ENCODE measurements at regions of chr7 and their contacts with region 1.

Region 1: DNA sequence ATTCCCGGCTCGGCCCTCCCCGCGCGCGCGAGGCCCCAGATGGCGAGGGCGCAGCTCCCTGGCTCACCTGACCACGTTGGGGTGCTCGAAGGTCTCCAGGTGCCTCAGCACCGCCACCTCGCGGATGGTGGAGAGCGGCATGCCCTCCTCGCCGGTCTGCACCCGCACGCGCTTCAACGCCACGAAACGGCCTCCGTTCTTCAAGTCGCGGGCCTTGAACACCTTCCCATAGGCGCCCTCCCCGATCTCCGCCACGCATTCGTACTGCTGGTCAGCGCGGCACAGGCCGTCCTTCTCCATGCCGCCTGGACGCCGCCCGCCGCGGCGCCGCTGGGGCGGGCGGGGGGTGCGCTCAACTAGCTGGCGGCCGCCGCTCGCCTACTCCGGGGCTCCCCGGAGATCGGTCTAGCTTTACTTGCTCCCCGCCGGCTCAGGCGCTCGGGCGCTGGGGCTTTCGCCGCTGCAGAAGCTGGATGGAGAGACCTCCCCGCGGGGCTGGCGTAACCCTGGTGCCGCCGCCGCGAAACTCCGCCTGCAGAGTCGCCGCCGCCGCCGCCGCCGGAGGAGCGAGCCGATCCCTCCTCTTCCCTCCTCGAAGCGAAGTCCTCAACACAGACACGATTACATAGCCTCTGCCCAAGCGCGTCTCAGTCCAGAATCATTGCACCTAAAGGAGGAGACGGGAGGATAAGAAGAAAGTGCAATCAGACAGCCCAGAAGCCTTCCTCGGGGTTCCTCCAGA is 3.2 kb downstream of the CDK6 start:
- DNase-seq: peak; percentile 94
- ATAC-seq: peak; percentile 63
- H3K4me3 Mint-ChIP-seq: peak overlapping the region; percentile 94
- H3K27ac Mint-ChIP-seq: peak overlapping the region; percentile 93
- H3K4me1 Mint-ChIP-seq: peaks cover 43% of the 10 kb centered on the region
- H3K27me3 Mint-ChIP-seq: peaks cover 2% of the 10 kb centered on the region
- CTCF ChIP-seq: peak; percentile 82

Region 2: DNA sequence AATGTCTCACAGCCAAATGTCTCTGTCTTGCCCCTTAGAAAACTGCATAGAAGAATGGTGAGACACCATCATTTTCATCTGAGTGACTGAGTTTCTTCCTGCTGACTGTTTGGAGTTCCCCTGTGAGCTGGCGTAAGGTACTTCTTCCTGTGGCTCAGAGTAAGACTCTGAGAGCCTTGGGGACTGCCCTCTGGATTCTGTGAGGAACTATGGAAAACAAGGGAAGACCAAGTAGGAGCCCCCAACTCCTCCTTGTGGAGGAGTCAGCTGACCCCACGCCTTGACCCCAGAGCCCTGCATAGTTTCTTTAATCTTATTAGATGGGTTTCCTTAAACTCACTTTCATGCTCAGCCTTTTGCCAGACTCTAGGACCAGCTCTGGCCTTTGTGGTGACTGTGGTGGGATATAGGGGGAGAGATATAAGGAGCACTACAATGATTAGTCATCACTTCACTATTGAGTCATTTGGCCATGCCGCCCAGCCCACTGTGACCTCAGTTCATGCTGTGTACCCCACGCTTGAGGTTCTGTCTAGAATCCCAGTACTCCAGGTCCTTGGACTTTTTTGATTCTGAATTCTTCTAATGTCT is 191.2 kb before region 1 on chr7:
- CTCF ChIA-PET with region 1: interaction called, 4 read pairs
- POLR2A ChIA-PET with region 1: interaction called, 13 read pairs
- intact Hi-C with region 1: no loop called
- DNase-seq: peak; percentile 87
- ATAC-seq: peak; percentile 71
- H3K4me3 Mint-ChIP-seq: peak overlapping the region; percentile 9
- H3K27ac Mint-ChIP-seq: peak overlapping the region; percentile 92
- H3K4me1 Mint-ChIP-seq: peaks cover 86% of the 10 kb centered on the region
- H3K27me3 Mint-ChIP-seq: no peaks in the 10 kb centered on the region
- CTCF ChIP-seq: no peak

Region 3: DNA sequence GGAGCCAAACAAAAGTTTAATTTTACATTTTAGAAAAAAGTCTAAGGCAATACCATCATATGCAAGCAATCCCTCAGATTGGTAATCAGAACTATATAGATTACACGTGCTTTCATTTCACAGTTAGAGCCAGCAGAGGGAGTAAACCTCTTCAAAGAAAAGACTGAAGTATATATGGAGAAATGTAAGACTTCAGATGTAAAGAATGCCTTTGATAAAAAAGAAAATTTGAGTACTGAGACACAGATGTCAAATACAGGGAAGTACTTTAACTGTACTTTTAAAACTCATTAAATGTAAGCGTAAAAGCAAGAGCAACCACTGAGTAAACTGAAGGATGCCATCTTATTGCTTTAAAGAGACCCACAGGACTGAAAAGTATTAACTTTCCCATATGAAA is 141.6 kb before region 1 on chr7:
- CTCF ChIA-PET with region 1: interaction called, 14 read pairs
- POLR2A ChIA-PET with region 1: interaction called, 4 read pairs
- intact Hi-C with region 1: loop called (anchors 1 kb)
- DNase-seq: peak; percentile 40
- ATAC-seq: peak; percentile 92
- H3K4me3 Mint-ChIP-seq: no peak overlapping the region
- H3K27ac Mint-ChIP-seq: peak overlapping the region; percentile 59
- H3K4me1 Mint-ChIP-seq: peaks cover 56% of the 10 kb centered on the region
- H3K27me3 Mint-ChIP-seq: no peaks in the 10 kb centered on the region
- CTCF ChIP-seq: peak; percentile 66

Region 4: DNA sequence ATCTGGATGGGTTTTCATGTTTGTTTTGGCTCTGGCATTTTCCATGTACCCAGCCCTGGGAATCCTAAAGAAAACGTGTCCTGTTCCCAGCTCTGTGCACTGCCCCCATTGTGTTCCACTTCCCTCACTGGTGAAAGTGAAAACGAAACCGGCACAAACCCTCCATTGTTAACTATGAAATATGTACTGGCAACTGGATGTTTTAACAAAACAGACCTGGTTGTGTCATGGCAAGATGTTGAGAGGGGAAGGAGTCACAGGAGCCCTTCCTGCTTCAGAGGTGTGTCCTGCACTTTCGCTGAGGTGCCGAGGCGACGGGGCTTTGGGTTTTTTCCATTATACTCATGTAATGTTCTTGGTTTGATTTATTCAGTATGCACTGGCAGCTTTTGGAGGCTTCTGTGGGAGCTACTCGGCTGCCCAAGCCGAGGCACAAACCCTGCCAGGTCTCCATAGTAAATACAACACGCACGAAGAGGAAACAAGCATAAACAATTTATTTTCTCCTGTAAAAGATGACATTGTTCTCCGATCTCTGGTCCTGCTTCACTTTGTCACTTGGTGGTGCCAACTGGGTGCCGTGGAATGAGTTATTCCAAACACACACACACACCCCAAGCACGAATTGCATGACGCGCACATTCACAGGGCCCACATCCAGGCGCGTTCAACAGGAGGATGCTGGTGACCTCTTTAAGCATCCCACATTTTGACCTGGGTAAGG is 115.0 kb before region 1 on chr7:
- CTCF ChIA-PET with region 1: interaction called, 6 read pairs
- POLR2A ChIA-PET with region 1: interaction called, 10 read pairs
- intact Hi-C with region 1: no loop called
- DNase-seq: peak; percentile 76
- ATAC-seq: peak; percentile 96
- H3K4me3 Mint-ChIP-seq: peak overlapping the region; percentile 69
- H3K27ac Mint-ChIP-seq: peak overlapping the region; percentile 92
- H3K4me1 Mint-ChIP-seq: peaks cover 55% of the 10 kb centered on the region
- H3K27me3 Mint-ChIP-seq: no peaks in the 10 kb centered on the region
- CTCF ChIP-seq: no peak

Region 5: DNA sequence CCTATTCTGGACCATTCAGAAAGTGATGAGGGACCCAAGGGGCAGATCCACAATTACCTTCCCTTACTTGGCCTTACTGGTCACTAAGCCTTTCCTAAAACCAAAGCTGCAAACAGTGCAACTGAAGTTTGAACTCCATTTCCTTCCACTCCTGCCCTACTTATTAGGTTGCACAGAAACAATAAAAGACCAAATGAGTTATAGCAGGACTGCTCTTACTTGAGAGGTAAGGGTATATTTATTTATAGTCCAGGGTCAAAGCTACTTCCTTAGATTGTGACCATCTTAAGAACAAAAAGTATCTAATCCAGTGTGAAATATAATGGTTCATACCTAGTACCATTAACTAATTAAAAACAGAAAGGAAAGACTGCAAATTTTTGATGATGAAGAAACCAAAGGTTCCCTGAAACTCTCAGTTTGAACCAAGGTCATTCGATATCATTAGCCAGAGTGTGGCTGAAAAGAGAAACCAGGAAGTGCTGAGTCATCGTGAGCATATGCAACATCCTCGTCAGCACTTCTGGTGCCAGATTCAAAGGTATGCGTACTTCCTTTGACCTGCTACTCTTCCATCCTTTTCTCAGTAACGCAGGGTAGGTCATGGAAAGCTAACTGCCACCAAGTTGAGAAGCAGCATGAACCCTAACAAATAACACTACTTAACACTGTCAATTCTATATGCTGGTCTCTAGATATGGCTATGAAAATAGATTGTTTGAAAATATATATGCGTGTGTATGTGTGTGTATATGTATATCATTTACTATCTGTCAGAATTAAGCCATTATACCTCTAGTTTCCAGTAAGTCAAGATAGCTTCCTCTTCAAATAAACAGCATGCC is 23.6 kb before region 1 on chr7:
- CTCF ChIA-PET with region 1: interaction called, 40 read pairs
- POLR2A ChIA-PET with region 1: interaction called, 52 read pairs
- intact Hi-C with region 1: loop called (anchors 2 kb)
- DNase-seq: peak; percentile 81
- ATAC-seq: peak; percentile 64
- H3K4me3 Mint-ChIP-seq: peak overlapping the region; percentile 38
- H3K27ac Mint-ChIP-seq: peak overlapping the region; percentile 92
- H3K4me1 Mint-ChIP-seq: peaks cover 69% of the 10 kb centered on the region
- H3K27me3 Mint-ChIP-seq: no peaks in the 10 kb centered on the region
- CTCF ChIP-seq: no peak

Region 6: GRCh38 chr7:92880212-92881090 is 47.3 kb after region 1 on chr7:
- CTCF ChIA-PET with region 1: no interaction called
- POLR2A ChIA-PET with region 1: no interaction called
- intact Hi-C with region 1: no loop called
- DNase-seq: peak; percentile 24
- ATAC-seq: peak; percentile 38
- H3K4me3 Mint-ChIP-seq: no peak overlapping the region
- H3K27ac Mint-ChIP-seq: no peak overlapping the region
- H3K4me1 Mint-ChIP-seq: peaks cover 36% of the 10 kb centered on the region
- H3K27me3 Mint-ChIP-seq: peaks cover 5% of the 10 kb centered on the region
- CTCF ChIP-seq: peak; percentile 12

Region 7: GRCh38 chr7:92904292-92905131 is 71.3 kb after region 1 on chr7:
- CTCF ChIA-PET with region 1: interaction called, 6 read pairs
- POLR2A ChIA-PET with region 1: interaction called, 10 read pairs
- intact Hi-C with region 1: loop called (anchors 5 kb)
- DNase-seq: peak; percentile 96
- ATAC-seq: peak; percentile 98
- H3K4me3 Mint-ChIP-seq: peak overlapping the region; percentile 11
- H3K27ac Mint-ChIP-seq: peak overlapping the region; percentile 87
- H3K4me1 Mint-ChIP-seq: peaks cover 25% of the 10 kb centered on the region
- H3K27me3 Mint-ChIP-seq: peaks cover 1% of the 10 kb centered on the region
- CTCF ChIP-seq: no peak

Region 8: GRCh38 chr7:93036807-93037206 is 203.6 kb after region 1 on chr7:
- CTCF ChIA-PET with region 1: interaction called, 3 read pairs
- POLR2A ChIA-PET with region 1: no interaction called
- intact Hi-C with region 1: loop called (anchors 5 kb)
- DNase-seq: peak; percentile 65
- ATAC-seq: peak; percentile 97
- H3K4me3 Mint-ChIP-seq: no peak overlapping the region
- H3K27ac Mint-ChIP-seq: peak overlapping the region; percentile 85
- H3K4me1 Mint-ChIP-seq: peaks cover 24% of the 10 kb centered on the region
- H3K27me3 Mint-ChIP-seq: no peaks in the 10 kb centered on the region
- CTCF ChIP-seq: no peak

Measured in activated CD8-positive, alpha-beta T cell treated with anti-CD3 and anti-CD28 coated beads for 36 hours (primary cell).